Psoas muscle (tissue), 8 donors: ENCODE measurements at regions of chr9 and their contacts with region 1.

Region 1: GRCh38 chr9:91193658-91194391 is 167.9 kb downstream of the AUH start:
- DNase-seq: peak; percentile 90 to 94
- ATAC-seq: peak; percentile 61 to 71 (median 66)
- H3K4me3 ChIP-seq: peak overlapping the region; percentile 70
- H3K27ac ChIP-seq: peak overlapping the region; percentile 100
- H3K4me1 ChIP-seq: peaks cover 54% of the 10 kb centered on the region
- H3K27me3 ChIP-seq: no peaks in the 10 kb centered on the region
- CTCF ChIP-seq: no peak

Region 2: DNA sequence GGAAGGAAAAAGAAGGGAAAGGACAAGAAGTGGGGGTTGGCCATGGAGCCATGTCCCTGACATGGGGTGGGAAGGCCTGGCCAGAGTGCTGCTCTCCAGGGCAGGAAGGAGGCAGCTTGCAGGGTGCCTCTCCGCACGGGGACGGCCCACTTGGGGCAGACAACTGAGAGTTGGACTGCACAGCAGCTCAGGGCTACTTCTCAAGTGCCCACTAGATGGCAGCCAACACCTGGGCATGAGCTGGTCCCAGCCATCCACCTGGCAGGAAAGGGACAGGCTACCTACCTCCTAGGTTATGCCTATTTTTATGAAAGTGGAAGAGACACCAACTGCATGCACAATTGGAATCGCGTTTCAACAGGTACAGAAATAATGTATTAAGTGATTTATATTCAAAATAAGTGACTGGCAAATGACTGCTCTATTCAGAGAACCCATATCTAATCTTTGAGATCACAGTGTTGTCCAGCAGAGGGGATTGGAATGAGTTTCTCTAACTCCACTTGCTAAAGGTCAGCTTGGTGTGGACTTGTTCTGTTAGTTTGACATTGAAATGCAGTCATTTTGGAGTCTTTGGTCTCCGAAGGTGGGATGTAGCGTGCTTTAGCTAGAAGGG is 278.8 kb before region 1 on chr9:
- intact Hi-C with region 1: loop called in 1 of 2 experiments (anchors 10 kb)
- DNase-seq: peak; percentile 67 to 84
- ATAC-seq: peak; percentile 84 to 96 (median 88)
- H3K4me3 ChIP-seq: no peak overlapping the region
- H3K27ac ChIP-seq: no peak overlapping the region
- H3K4me1 ChIP-seq: peaks cover 8% of the 10 kb centered on the region
- H3K27me3 ChIP-seq: no peaks in the 10 kb centered on the region
- CTCF ChIP-seq: peak; percentile 92

Region 3: GRCh38 chr9:91101611-91102168 is 92.1 kb before region 1 on chr9:
- intact Hi-C with region 1: loop called (anchors 1 to 2 kb)
- DNase-seq: no peak
- ATAC-seq: no peak
- H3K4me3 ChIP-seq: no peak overlapping the region
- H3K27ac ChIP-seq: peak overlapping the region; percentile 92
- H3K4me1 ChIP-seq: peaks cover 25% of the 10 kb centered on the region
- H3K27me3 ChIP-seq: no peaks in the 10 kb centered on the region
- CTCF ChIP-seq: no peak

Region 4: GRCh38 chr9:91117959-91118703 is 75.7 kb before region 1 on chr9:
- intact Hi-C with region 1: loop called in 1 of 2 experiments (anchors 5 kb)
- DNase-seq: peak; percentile 89 to 95
- ATAC-seq: peak; percentile 96 to 98 (median 97)
- H3K4me3 ChIP-seq: peak overlapping the region; percentile 62
- H3K27ac ChIP-seq: peak overlapping the region; percentile 92
- H3K4me1 ChIP-seq: peaks cover 30% of the 10 kb centered on the region
- H3K27me3 ChIP-seq: no peaks in the 10 kb centered on the region
- CTCF ChIP-seq: no peak

Region 5: DNA sequence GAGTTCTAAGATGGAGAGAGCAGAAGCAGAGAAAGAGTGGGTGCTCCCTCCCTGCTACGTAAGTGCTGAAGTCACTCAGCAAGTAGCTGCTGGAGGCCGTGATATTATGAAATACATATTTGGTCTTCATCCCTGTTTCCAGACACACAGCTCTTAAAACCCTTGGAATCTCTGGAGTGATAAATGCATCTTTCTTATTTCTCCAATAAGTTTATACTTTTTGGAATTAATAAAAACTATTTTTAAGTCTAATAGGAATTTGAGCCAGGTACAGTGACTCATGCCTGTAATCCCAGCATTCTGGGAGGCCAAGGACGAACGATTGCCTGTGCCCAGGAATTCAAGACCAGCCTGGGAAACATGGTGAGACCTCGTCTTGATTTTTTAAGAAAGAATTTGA is 107.3 kb after region 1 on chr9:
- intact Hi-C with region 1: loop called in 1 of 2 experiments (anchors 5 kb)
- DNase-seq: no peak
- ATAC-seq: peak in 3 of 4 donors; percentile 35 to 46 (median 39)
- H3K4me3 ChIP-seq: no peak overlapping the region
- H3K27ac ChIP-seq: peak overlapping the region; percentile 91
- H3K4me1 ChIP-seq: peaks cover 53% of the 10 kb centered on the region
- H3K27me3 ChIP-seq: no peaks in the 10 kb centered on the region
- CTCF ChIP-seq: no peak

Region 6: GRCh38 chr9:91361291-91362050 is 167.6 kb after region 1 on chr9 and contains the start of gene AUH:
- intact Hi-C with region 1: loop called (anchors 5 to 10 kb)
- DNase-seq: peak; percentile 87 to 93
- ATAC-seq: peak; percentile 98 to 99 (median 99)
- H3K4me3 ChIP-seq: peak within 1 kb of the TSS; percentile 99
- H3K27ac ChIP-seq: peak within 1 kb of the TSS; percentile 98
- H3K4me1 ChIP-seq: peaks cover 38% of the 10 kb centered on the region
- H3K27me3 ChIP-seq: no peaks in the 10 kb centered on the region
- CTCF ChIP-seq: no peak
- total RNA-seq, gene AUH: 14.1 to 20.6 (median 18.4) TPM